ENCODE measurements at regions of chr11 and their contacts with region 1.

Region 1: GRCh38 chr11:117807482-117808327 is 10.7 kb upstream of the DSCAML1 start:
- DNase-seq: peak; percentile 91
- ATAC-seq: peak; percentile 74
- H3K4me3 Mint-ChIP-seq: no peak overlapping the region
- H3K27ac Mint-ChIP-seq: no peak overlapping the region
- H3K4me1 Mint-ChIP-seq: peaks cover 16% of the 10 kb centered on the region
- H3K27me3 Mint-ChIP-seq: no peaks in the 10 kb centered on the region
- CTCF ChIP-seq: peak; percentile 99

Region 2: DNA sequence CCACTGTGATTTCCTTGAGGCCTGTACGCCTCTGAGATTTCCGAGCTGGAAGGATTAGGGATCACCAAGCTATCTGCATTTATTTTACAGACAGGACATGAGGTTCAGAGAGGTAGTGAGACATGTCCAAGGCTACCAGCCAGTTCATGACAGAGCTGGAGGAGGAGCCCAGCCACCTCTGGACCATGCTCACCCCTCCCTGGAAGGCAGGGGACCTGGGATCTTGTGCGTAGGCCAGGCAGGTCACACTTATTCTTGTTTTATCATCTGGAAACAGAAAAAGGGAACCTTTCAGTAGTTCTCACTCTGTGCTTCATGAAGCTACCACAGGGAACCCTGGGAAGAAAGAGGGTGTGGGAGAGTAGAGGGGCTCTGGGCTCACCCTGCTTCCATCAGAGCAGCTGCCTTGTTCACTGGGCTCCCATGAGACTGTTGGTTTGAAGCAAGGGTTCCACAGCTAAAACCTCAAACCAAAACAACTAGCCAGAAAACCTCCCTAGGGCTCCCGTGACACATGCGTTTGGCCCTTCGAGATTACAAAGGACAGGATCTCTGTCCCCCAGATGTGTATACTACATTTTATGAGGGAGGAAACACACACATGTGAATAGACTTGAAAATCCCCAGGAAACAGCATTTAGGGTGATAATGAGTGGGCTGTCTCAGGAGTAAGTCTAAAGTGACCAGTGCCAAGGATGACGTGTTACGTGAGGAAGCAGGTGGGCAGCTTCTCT is 117.1 kb before region 1 on chr11:
- CTCF ChIA-PET with region 1: no interaction called
- POLR2A ChIA-PET with region 1: no interaction called
- intact Hi-C with region 1: no loop called
- DNase-seq: no peak
- ATAC-seq: no peak
- H3K4me3 Mint-ChIP-seq: no peak overlapping the region
- H3K27ac Mint-ChIP-seq: no peak overlapping the region
- H3K4me1 Mint-ChIP-seq: no peaks in the 10 kb centered on the region
- H3K27me3 Mint-ChIP-seq: no peaks in the 10 kb centered on the region
- CTCF ChIP-seq: no peak

Region 3: DNA sequence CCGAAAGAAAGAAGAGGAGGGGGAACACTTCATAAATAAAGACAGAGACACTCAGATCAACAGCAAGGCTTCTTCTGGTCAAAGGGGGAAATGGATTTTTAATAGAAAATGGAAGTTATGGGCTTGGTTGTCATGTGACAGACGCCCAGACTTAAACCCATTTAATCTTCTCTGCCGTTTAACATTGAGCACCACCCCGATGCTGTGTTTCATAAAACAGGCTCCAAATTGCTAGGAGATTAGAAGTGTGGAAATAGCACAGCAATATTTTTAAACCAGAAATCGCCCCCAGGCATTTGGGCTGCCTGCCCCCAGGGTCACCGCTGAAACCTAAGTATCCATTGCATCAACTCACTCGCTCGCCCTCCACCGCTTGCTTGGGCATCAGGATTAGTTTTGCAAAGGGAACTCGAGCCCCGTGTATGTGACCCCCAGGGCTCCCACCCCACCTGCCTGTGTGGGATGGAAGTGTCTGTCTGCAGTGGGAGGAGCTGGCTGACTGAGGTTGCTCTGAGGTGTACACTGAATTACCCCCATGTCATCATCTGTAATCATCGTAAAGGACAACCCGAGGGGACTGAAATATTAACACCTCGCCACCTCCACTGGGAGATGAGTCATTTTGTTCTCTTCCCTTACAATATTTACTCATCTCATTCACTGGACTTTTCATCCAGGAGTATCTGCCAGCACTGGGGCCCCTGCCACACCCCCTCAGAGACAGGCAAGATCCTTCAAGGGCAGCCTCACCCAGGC is 21.4 kb before region 1 on chr11:
- CTCF ChIA-PET with region 1: interaction called, 10 read pairs
- POLR2A ChIA-PET with region 1: no interaction called
- intact Hi-C with region 1: no loop called
- DNase-seq: no peak
- ATAC-seq: no peak
- H3K4me3 Mint-ChIP-seq: no peak overlapping the region
- H3K27ac Mint-ChIP-seq: no peak overlapping the region
- H3K4me1 Mint-ChIP-seq: no peaks in the 10 kb centered on the region
- H3K27me3 Mint-ChIP-seq: peaks cover 15% of the 10 kb centered on the region
- CTCF ChIP-seq: no peak

Region 4: GRCh38 chr11:117828611-117829368 is 21.1 kb after region 1 on chr11:
- CTCF ChIA-PET with region 1: interaction called, 66 read pairs
- POLR2A ChIA-PET with region 1: interaction called, 3 read pairs
- intact Hi-C with region 1: no loop called
- DNase-seq: peak; percentile 97
- ATAC-seq: peak; percentile 89
- H3K4me3 Mint-ChIP-seq: peak overlapping the region; percentile 42
- H3K27ac Mint-ChIP-seq: peak overlapping the region; percentile 77
- H3K4me1 Mint-ChIP-seq: peaks cover 68% of the 10 kb centered on the region
- H3K27me3 Mint-ChIP-seq: no peaks in the 10 kb centered on the region
- CTCF ChIP-seq: no peak

Region 5: GRCh38 chr11:117861151-117862018 is 53.7 kb after region 1 on chr11:
- CTCF ChIA-PET with region 1: interaction called, 10 read pairs
- POLR2A ChIA-PET with region 1: no interaction called
- intact Hi-C with region 1: no loop called
- DNase-seq: no peak
- ATAC-seq: no peak
- H3K4me3 Mint-ChIP-seq: no peak overlapping the region
- H3K27ac Mint-ChIP-seq: peak overlapping the region; percentile 3
- H3K4me1 Mint-ChIP-seq: peaks cover 3% of the 10 kb centered on the region
- H3K27me3 Mint-ChIP-seq: peaks cover 2% of the 10 kb centered on the region
- CTCF ChIP-seq: no peak

Region 6: GRCh38 chr11:117932067-117932370 is 124.3 kb after region 1 on chr11:
- CTCF ChIA-PET with region 1: interaction called, 13 read pairs
- POLR2A ChIA-PET with region 1: no interaction called
- intact Hi-C with region 1: no loop called
- DNase-seq: peak; percentile 91
- ATAC-seq: peak; percentile 35
- H3K4me3 Mint-ChIP-seq: peak overlapping the region; percentile 24
- H3K27ac Mint-ChIP-seq: peak overlapping the region; percentile 98
- H3K4me1 Mint-ChIP-seq: peaks cover 84% of the 10 kb centered on the region
- H3K27me3 Mint-ChIP-seq: no peaks in the 10 kb centered on the region
- CTCF ChIP-seq: no peak